T-cell (primary cell): ENCODE measurements at regions of chr11 and their contacts with region 1.

Region 1: GRCh38 chr11:86193297-86194095 is 51.1 kb upstream of the EED start:
- DNase-seq: peak in 34 of 35 experiments; percentile 19 to 83 (median 46)
- ATAC-seq: peak; percentile 99 to 100 (median 99)
- H3K4me3 ChIP-seq: peak overlapping the region in 1 of 2 donors; percentile 36
- H3K4me3 Mint-ChIP-seq: peak overlapping the region; percentile 73 to 80 (median 79)
- H3K27ac ChIP-seq: no peak overlapping the region
- H3K27ac Mint-ChIP-seq: peak overlapping the region; percentile 82 to 87
- H3K4me1 ChIP-seq: peaks cover 6 to 10% of the 10 kb centered on the region in 2 experiments
- H3K4me1 Mint-ChIP-seq: peaks cover 13 to 16% (median 16%) of the 10 kb centered on the region in 3 donors
- H3K27me3 ChIP-seq: no peaks in the 10 kb centered on the region
- H3K27me3 Mint-ChIP-seq: no peaks in the 10 kb centered on the region

Region 2: DNA sequence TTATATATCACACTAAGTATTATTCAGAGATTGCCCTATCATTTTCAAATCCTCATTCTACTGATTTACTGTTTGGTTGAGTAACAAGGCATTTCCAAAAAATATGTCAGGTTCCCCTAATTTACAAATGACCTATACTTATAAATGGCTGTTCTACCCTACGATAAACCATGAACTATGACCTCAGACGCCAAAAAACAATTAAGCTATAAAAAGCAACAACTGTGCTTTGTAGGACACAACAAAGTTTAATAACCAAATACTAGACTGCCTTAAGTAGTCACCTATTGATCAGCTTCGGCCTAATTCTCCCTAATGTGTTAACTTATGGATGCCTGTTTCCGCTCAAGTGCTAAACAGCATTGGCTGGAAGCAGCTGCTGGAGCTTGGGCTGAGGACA is 177.8 kb before region 1 on chr11:
- CTCF ChIA-PET with region 1: interaction called in 1 of 2 experiments, 10 read pairs
- POLR2A ChIA-PET with region 1: no interaction called
- DNase-seq: no peak
- ATAC-seq: no peak
- H3K4me3 ChIP-seq: no peak overlapping the region
- H3K4me3 Mint-ChIP-seq: no peak overlapping the region
- H3K27ac ChIP-seq: no peak overlapping the region
- H3K27ac Mint-ChIP-seq: peak overlapping the region in 1 of 2 donors; percentile 12
- H3K4me1 ChIP-seq: no peaks in the 10 kb centered on the region
- H3K4me1 Mint-ChIP-seq: peaks cover 17 to 27% (median 26%) of the 10 kb centered on the region in 3 donors
- H3K27me3 ChIP-seq: no peaks in the 10 kb centered on the region
- H3K27me3 Mint-ChIP-seq: no peaks in the 10 kb centered on the region

Region 3: GRCh38 chr11:86068951-86069407 is 124.5 kb before region 1 on chr11 and contains the start of gene PICALM:
- CTCF ChIA-PET with region 1: interaction called, 6 to 18 read pairs
- POLR2A ChIA-PET with region 1: interaction called in 1 of 2 experiments, 4 read pairs
- DNase-seq: peak; percentile 90 to 99 (median 95)
- ATAC-seq: peak; percentile 90 to 93 (median 91)
- H3K4me3 ChIP-seq: peak within 1 kb of the TSS; percentile 80 to 85
- H3K4me3 Mint-ChIP-seq: peak within 1 kb of the TSS; percentile 99
- H3K27ac ChIP-seq: peak within 1 kb of the TSS; percentile 90
- H3K27ac Mint-ChIP-seq: peak within 1 kb of the TSS; percentile 88 to 96
- H3K4me1 ChIP-seq: peaks cover 19 to 27% of the 10 kb centered on the region in 2 experiments
- H3K4me1 Mint-ChIP-seq: peaks cover 33 to 50% (median 36%) of the 10 kb centered on the region in 3 donors
- H3K27me3 ChIP-seq: no peaks in the 10 kb centered on the region
- H3K27me3 Mint-ChIP-seq: peaks cover 0 to 3% of the 10 kb centered on the region in 2 donors
- total RNA-seq, gene PICALM: 97.7 to 121 (median 105) TPM

Region 4: GRCh38 chr11:87616511-87616910 is 1423.0 kb after region 1 on chr11:
- CTCF ChIA-PET with region 1: no interaction called
- POLR2A ChIA-PET with region 1: no interaction called
- DNase-seq: no peak
- ATAC-seq: no peak
- H3K4me3 ChIP-seq: no peak overlapping the region
- H3K4me3 Mint-ChIP-seq: no peak overlapping the region
- H3K27ac ChIP-seq: no peak overlapping the region
- H3K27ac Mint-ChIP-seq: no peak overlapping the region
- H3K4me1 ChIP-seq: no peaks in the 10 kb centered on the region
- H3K4me1 Mint-ChIP-seq: no peaks in the 10 kb centered on the region
- H3K27me3 ChIP-seq: no peaks in the 10 kb centered on the region
- H3K27me3 Mint-ChIP-seq: no peaks in the 10 kb centered on the region